ENCODE measurements at regions of chr10 and their contacts with region 1.

Region 1: DNA sequence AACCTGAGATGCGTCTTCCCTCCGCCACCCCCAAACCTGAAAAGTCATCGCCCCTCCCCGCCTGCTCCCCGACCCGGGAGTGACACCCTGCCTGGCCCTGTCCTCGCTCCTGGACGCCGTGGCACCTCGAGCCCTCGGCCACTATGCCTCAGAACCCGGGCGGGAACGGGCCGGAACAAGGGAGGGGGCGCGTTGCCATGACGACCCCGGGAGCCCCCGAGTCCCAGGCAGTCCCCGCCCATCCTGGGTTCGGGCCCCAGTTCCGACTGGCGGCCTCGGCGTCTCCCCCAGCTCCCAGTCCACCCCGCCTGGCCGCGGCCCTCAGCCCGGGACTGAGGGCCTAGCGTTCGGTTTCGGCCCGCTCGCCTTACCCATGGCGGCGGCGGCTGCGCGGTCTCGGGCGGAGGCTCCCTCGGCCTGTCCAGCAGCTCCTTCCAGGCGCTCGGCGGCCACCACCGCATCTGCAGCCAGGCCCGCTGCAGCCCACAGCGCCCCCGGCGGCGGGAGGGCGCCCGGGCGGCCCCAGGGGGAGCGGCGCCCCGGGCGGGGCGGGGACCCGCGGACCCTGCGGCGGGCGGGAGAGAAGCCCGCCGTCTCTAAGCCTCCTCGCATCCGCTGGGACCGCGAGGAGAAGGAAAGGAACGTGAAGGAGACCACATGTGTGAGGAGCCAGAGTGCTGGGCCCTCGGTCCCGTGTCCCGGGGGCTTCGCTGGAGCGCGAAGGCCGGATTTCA is at the start of gene RUFY2:
- DNase-seq: peak; percentile 62
- H3K4me3 ChIP-seq: peak within 1 kb of the TSS; percentile 84 to 97 (median 90)
- H3K27ac ChIP-seq: peak within 1 kb of the TSS; percentile 88
- H3K4me1 ChIP-seq: peaks cover 5% of the 10 kb centered on the region
- H3K27me3 ChIP-seq: no peaks in the 10 kb centered on the region
- CTCF ChIP-seq: peak; percentile 43 to 50
- total RNA-seq, gene RUFY2: 27.2 to 28.9 TPM

Region 2: GRCh38 chr10:68434657-68435056 is 27.7 kb after region 1 on chr10:
- CTCF ChIA-PET with region 1: interaction called, 30 read pairs
- dilution Hi-C with region 1: no loop called
- in situ Hi-C with region 1: no loop called
- intact Hi-C with region 1: no loop called
- DNase-seq: peak; percentile 72
- H3K4me3 ChIP-seq: no peak overlapping the region
- H3K27ac ChIP-seq: no peak overlapping the region
- H3K4me1 ChIP-seq: peaks cover 9% of the 10 kb centered on the region
- H3K27me3 ChIP-seq: no peaks in the 10 kb centered on the region
- CTCF ChIP-seq: no peak

Region 3: DNA sequence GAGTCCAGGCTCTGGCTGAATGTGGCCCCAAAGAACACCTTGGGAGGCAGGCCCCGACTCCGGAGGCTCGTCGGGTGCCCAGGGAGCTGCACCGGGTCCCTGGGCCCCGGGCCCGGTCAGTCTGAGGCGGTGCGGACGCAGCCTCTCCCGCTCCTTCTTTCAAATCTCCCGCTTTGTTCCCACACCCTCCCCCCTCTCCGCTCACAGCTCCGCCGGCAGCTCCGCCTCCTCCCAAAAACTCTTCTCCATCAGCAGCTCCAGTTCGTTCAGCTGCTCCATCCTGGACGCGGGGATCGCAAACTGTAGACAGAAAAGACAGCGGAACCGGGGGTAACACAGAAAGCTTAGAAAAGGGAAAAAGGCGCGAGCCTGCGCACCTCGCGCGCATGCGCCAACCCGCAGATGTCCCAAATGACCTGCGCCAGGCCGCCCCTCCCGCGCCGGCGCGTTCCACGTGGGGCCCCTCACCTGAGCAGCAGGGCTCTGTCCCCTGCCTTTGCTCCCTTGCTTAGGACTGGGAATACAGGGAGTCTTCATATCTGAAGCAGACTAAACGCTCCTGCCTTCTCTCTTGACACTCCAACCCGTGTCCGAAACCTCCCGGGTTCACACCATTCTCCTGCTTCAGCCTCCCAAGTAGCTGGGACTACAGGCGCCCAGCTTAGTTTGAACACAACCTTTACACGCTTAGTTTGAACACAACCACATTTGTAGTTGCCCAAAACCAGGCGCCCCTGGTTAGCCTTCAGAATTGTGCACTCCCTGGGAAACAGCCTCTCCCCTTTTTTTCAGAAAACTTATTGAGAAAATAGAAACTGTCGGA is 64.8 kb after region 1 on chr10 and contains the start of gene DNA2:
- CTCF ChIA-PET with region 1: no interaction called
- dilution Hi-C with region 1: no loop called
- in situ Hi-C with region 1: no loop called
- intact Hi-C with region 1: loop called (anchors 5 kb)
- DNase-seq: peak; percentile 75
- H3K4me3 ChIP-seq: peak within 1 kb of the TSS; percentile 80 to 94 (median 83)
- H3K27ac ChIP-seq: peak within 1 kb of the TSS; percentile 82
- H3K4me1 ChIP-seq: peaks cover 5% of the 10 kb centered on the region
- H3K27me3 ChIP-seq: no peaks in the 10 kb centered on the region
- CTCF ChIP-seq: no peak
- total RNA-seq, gene DNA2: 3.8 to 10.3 TPM

Region 4: DNA sequence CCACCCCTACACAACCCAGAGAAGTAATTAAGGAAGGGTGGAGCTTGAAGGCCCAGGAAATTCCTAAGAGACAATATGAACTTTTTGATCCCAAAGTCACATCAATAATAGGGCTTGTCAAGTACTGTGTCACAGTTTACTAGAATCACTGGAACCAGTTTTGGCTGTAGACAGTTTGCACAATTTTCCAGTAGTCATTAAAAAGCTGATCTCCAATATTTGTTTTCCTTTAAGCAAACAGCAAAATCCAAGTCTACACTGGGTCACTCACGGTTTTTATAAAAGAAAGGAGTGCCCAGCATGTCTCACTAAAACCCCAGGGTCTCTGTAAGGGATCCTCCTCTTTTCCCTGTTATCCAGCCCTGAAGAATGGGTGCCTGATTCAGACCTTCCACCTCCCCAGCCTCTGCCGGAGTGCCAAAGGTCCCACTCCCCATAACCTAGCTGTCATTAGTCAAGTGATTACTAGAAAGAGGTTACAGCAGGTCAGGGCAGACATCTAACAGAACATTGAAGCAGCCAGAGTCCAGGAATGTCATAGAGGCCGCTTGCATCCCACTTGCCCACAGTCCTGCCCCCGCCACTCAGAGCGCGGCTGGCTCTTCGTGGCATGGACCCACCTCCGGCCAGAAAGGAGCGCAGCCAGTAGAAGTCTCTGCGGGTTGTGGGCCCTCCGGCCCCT is 119.8 kb after region 1 on chr10:
- CTCF ChIA-PET with region 1: interaction called, 22 read pairs
- dilution Hi-C with region 1: no loop called
- in situ Hi-C with region 1: no loop called
- intact Hi-C with region 1: no loop called
- DNase-seq: no peak
- H3K4me3 ChIP-seq: peak overlapping the region; percentile 69 to 99 (median 91)
- H3K27ac ChIP-seq: peak overlapping the region; percentile 76
- H3K4me1 ChIP-seq: no peaks in the 10 kb centered on the region
- H3K27me3 ChIP-seq: no peaks in the 10 kb centered on the region
- CTCF ChIP-seq: no peak

Region 5: DNA sequence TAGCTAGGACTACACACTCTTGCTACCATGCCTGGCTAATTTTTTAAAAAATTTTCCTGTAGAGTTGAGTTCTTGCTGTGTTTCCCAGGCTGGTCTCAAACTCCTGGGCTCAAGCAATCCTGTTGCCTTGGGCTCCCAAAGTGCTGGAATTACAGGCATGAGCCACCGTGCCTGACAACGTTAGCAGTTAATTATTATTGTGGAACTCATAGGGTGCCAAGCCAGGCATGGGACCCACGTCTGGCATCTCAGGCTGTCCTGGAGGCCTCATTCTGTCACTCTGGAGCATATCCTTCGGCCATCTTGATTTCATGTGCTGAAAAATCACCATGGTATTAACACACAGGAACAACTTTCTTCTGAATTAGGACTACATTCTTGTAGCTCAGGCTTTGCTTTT is 441.8 kb after region 1 on chr10:
- CTCF ChIA-PET with region 1: no interaction called
- dilution Hi-C with region 1: no loop called
- in situ Hi-C with region 1: no loop called
- intact Hi-C with region 1: no loop called
- DNase-seq: no peak
- H3K4me3 ChIP-seq: no peak overlapping the region
- H3K27ac ChIP-seq: no peak overlapping the region
- H3K4me1 ChIP-seq: no peaks in the 10 kb centered on the region
- H3K27me3 ChIP-seq: no peaks in the 10 kb centered on the region
- CTCF ChIP-seq: no peak

Measured in mammary epithelial cell (primary cell).